ENCODE measurements at regions of chr10 and their contacts with region 1.

Region 1: GRCh38 chr10:45404087-45404769 is 30.2 kb downstream of the ALOX5 start:
- DNase-seq: no peak
- ATAC-seq: peak; percentile 84
- H3K4me3 Mint-ChIP-seq: no peak overlapping the region
- H3K27ac Mint-ChIP-seq: peak overlapping the region; percentile 72
- H3K4me1 Mint-ChIP-seq: peaks cover 58% of the 10 kb centered on the region
- H3K27me3 Mint-ChIP-seq: no peaks in the 10 kb centered on the region
- CTCF ChIP-seq: no peak

Region 2: GRCh38 chr10:45249978-45250693 is 154.1 kb before region 1 on chr10:
- CTCF ChIA-PET with region 1: interaction called, 4 read pairs
- POLR2A ChIA-PET with region 1: no interaction called
- intact Hi-C with region 1: loop called (anchors 5 kb)
- DNase-seq: peak; percentile 42
- ATAC-seq: peak; percentile 84
- H3K4me3 Mint-ChIP-seq: peak overlapping the region; percentile 85
- H3K27ac Mint-ChIP-seq: peak overlapping the region; percentile 91
- H3K4me1 Mint-ChIP-seq: peaks cover 26% of the 10 kb centered on the region
- H3K27me3 Mint-ChIP-seq: peaks cover 2% of the 10 kb centered on the region
- CTCF ChIP-seq: peak; percentile 81